ENCODE measurements at regions of chr18 and their contacts with region 1.

Region 1: DNA sequence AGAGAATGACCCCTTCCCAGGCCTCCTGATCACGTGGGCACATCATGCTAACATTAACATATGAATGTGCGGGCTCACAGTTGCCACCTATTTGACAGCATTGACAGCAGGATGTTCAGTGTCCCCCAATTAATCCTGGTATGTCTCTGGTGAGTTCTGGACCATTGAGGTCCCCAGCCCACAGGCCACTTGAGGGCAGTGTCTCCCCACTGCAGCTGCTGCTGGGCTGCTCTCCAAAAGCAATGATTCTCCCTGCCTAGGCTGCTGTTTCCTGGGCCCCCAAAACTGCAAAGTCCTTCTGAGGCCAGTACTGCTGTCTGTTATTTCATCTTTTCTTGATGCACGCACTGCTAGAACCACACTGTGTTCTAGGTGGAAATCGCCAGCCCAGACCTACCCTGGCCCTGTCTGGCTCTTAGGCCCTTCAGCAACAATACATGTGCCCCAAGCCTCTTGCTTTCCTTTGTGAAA is 52.7 kb upstream of the MAPK4 start:
- DNase-seq: peak; percentile 48 to 79
- H3K4me3 ChIP-seq: no peak overlapping the region
- H3K27ac ChIP-seq: no peak overlapping the region
- H3K4me1 ChIP-seq: no peaks in the 10 kb centered on the region
- H3K27me3 ChIP-seq: no peaks in the 10 kb centered on the region
- CTCF ChIP-seq: peak in 5 of 7 experiments; percentile 49 to 68 (median 57)
- EP300 ChIP-seq: no peak
- POLR2A ChIP-seq: no peak

Region 2: DNA sequence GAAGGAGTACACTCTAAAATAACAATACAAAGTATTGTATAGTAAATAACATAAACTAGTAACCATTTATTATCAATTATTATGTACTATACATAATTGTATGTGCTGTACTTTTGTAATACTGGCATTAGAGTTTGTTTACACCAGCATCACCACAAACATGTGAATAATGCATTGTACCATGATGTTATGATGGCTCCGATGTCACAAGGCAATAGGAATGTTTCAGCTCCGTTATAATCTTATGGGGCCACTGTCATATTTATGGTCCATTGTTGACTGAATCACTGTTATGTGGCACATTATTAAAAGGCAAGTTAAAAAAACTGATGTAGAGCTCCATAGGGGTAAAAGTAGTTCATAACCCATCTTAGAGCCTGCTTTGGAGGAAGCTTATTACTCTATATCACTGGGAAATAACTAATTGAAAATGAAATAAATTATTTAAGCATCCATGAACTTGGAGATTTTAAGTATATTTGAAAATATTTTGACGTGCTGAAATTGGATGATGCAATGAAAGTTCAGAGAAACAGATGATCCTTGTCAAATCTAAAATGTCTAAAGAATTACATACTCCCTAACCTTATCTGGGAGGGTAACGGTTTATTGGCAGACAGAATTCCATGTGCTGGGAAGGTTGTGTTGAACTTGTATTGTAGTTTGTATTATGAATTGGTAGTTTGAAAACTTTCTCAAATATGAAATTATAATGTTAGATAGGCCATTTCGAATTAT is 129.9 kb before region 1 on chr18:
- intact Hi-C with region 1: no loop called
- DNase-seq: no peak
- H3K4me3 ChIP-seq: no peak overlapping the region
- H3K27ac ChIP-seq: no peak overlapping the region
- H3K4me1 ChIP-seq: peaks cover 9 to 22% (median 14%) of the 10 kb centered on the region in 4 donors
- H3K27me3 ChIP-seq: no peaks in the 10 kb centered on the region
- CTCF ChIP-seq: no peak
- EP300 ChIP-seq: no peak
- POLR2A ChIP-seq: no peak

Region 3: GRCh38 chr18:50573679-50574078 is 66.5 kb after region 1 on chr18:
- intact Hi-C with region 1: no loop called
- DNase-seq: no peak
- H3K4me3 ChIP-seq: no peak overlapping the region
- H3K27ac ChIP-seq: no peak overlapping the region
- H3K4me1 ChIP-seq: no peaks in the 10 kb centered on the region
- H3K27me3 ChIP-seq: no peaks in the 10 kb centered on the region
- CTCF ChIP-seq: no peak
- EP300 ChIP-seq: no peak
- POLR2A ChIP-seq: no peak

Region 4: DNA sequence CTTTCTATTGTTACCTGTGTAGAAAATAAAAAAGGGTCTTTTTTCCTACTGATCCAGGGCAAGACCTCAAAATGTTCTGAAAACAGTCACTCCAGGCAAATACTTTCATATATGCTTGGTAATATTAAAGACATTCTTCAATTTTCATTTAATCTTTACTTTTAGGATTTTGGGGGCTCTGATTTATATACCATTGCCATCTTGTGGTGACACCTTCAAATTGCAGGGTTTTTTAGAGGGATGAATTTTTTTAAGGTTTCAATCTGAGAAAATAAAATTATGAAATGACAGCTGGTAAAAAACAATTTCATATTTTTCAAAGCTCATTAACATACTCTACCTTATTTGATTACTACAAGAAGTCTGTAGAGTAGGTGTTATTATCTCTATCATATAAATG is 79.6 kb after region 1 on chr18:
- intact Hi-C with region 1: loop called (anchors 10 kb)
- DNase-seq: no peak
- H3K4me3 ChIP-seq: no peak overlapping the region
- H3K27ac ChIP-seq: no peak overlapping the region
- H3K4me1 ChIP-seq: no peaks in the 10 kb centered on the region
- H3K27me3 ChIP-seq: no peaks in the 10 kb centered on the region
- CTCF ChIP-seq: peak in 2 of 7 experiments; percentile 14 to 30
- EP300 ChIP-seq: no peak
- POLR2A ChIP-seq: no peak

Region 5: DNA sequence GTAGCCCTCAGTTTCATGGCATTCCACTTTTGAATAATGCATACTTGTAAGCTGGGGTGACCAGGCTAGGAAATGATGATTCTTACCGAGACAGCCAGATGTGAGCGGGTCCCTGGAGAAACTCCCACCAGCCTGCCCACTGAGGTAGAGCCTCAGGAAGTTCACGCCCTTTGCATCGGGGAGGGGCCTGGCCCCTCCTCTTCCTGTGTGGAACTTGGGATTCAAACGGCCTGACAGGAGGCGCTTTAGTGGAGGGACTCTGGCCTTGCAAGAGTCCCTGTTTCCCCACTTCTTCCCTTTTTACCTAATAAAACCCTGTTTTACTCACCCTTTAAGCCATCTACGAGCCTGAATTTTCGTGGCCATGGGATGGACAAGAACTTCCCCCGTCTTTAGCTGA is 268.1 kb after region 1 on chr18:
- intact Hi-C with region 1: loop called (anchors 5 kb)
- DNase-seq: no peak
- H3K4me3 ChIP-seq: no peak overlapping the region
- H3K27ac ChIP-seq: no peak overlapping the region
- H3K4me1 ChIP-seq: no peaks in the 10 kb centered on the region
- H3K27me3 ChIP-seq: no peaks in the 10 kb centered on the region
- CTCF ChIP-seq: no peak
- EP300 ChIP-seq: no peak
- POLR2A ChIP-seq: no peak

Measured in stomach (tissue), 19 donors.